ENCODE measurements at regions of chr11 and their contacts with region 1.

Region 1: GRCh38 chr11:110429731-110430266 is at the start of gene FDX1:
- DNase-seq: peak; percentile 74
- ATAC-seq: peak; percentile 86
- H3K4me3 ChIP-seq: peak within 1 kb of the TSS; percentile 86
- H3K27ac ChIP-seq: peak within 1 kb of the TSS; percentile 92
- H3K4me1 ChIP-seq: peaks cover 9% of the 10 kb centered on the region
- H3K27me3 ChIP-seq: no peaks in the 10 kb centered on the region
- CTCF ChIP-seq: peak; percentile 65
- POLR2A ChIP-seq: peak; percentile 82
- RAD21 ChIP-seq: peak; percentile 38
- total RNA-seq, gene FDX1: 4.3 and 10.6 TPM in 2 replicates

Region 2: DNA sequence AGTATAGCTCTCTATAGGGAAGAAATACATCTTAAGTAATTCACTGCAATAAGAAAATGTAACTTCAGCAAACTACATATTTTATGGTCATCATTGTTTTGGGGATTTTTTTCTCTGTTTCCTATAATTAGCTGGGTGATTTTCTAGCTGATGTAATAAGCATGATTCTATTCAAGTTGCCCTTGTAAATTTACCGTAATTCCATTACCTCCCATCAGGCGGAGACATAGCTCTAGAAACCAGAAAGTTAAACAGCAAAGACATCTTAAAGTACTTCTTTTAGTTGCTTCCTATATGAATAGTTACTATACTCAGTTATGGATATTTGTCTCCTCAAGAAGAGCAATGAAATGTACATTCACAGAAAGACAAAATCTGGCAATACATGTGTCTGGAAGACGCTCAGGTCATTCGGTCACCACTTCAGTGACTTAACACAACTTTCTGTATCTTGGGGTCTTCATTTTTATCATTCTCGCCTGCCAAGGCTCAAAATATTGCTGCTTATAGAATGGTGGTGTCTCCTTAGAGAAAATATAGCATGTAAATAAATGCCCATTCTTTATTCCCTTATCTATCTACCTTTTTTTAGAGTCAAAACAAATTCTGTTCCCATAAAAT is 576.5 kb before region 1 on chr11:
- CTCF ChIA-PET with region 1: no interaction called
- POLR2A ChIA-PET with region 1: no interaction called
- dilution Hi-C with region 1: no loop called
- in situ Hi-C with region 1: no loop called
- intact Hi-C with region 1: loop called (anchors 1 kb)
- DNase-seq: peak; percentile 87
- ATAC-seq: peak; percentile 87
- H3K4me3 ChIP-seq: no peak overlapping the region
- H3K27ac ChIP-seq: no peak overlapping the region
- H3K4me1 ChIP-seq: no peaks in the 10 kb centered on the region; the same call in 1 of the 2 replicates
- H3K27me3 ChIP-seq: no peaks in the 10 kb centered on the region
- CTCF ChIP-seq: peak; percentile 91
- POLR2A ChIP-seq: no peak
- RAD21 ChIP-seq: peak; percentile 87

Region 3: DNA sequence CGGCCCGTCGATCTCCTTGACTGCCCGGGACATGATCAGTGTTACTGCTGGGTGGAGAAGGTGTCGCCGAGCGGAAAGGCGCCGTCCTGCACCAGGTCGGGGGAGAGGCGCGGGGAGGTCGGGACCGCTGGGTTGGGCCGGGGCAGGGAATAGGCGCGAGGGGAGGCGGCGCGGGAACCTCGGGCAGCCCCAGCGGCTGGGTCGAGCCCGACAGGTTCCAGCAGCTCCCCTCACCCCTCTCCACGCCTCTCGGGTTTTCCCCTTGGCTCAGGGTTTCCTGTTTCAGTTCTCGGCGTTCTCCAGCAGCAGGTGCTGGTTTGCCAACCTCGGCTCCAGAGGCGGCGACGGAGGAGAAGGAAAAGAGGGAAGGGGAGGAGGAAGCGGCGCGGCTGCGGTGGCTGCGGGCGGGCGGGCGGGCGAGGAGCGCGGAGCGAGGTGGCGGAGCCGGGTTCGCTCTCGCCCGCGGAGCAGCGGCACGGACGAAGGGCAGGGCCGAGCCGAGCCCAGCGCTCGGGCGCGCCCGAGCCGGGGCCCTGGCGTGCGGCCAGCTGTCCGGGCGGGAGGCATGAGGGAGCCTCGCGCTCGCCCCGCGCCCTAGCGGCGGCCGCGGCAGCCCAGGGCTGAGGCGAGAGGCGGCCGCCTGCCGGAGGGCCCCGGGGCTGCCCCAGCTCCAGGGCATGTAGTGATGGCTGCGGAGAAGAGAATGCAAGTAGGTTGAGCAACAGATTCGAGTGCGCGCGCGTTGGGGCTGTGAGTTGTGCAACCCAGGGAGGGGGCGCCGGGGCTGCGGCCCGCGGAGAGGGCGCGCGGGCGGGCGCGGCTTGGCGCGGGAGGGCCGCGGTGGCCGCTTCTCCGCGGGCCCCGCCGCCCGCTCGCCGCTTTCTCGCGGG is 337.0 kb before region 1 on chr11 and contains the start of gene ZC3H12C:
- CTCF ChIA-PET with region 1: no interaction called
- POLR2A ChIA-PET with region 1: no interaction called
- dilution Hi-C with region 1: no loop called
- in situ Hi-C with region 1: no loop called
- intact Hi-C with region 1: loop called (anchors 2 kb)
- DNase-seq: peak; percentile 90
- ATAC-seq: peak; percentile 88
- H3K4me3 ChIP-seq: peak within 1 kb of the TSS; percentile 76
- H3K27ac ChIP-seq: peak within 1 kb of the TSS; percentile 92
- H3K4me1 ChIP-seq: peaks cover 7% of the 10 kb centered on the region
- H3K27me3 ChIP-seq: no peaks in the 10 kb centered on the region
- CTCF ChIP-seq: peak; percentile 81
- POLR2A ChIP-seq: peak; percentile 80
- RAD21 ChIP-seq: peak; percentile 58
- total RNA-seq, gene ZC3H12C: 14.2 and 15.8 TPM in 2 replicates

Region 4: GRCh38 chr11:110296226-110297075 is 133.3 kb before region 1 on chr11 and contains the start of gene RDX:
- CTCF ChIA-PET with region 1: no interaction called
- POLR2A ChIA-PET with region 1: no interaction called
- dilution Hi-C with region 1: no loop called
- in situ Hi-C with region 1: no loop called
- intact Hi-C with region 1: loop called (anchors 1 kb)
- DNase-seq: peak; percentile 63
- ATAC-seq: peak; percentile 92
- H3K4me3 ChIP-seq: peak within 1 kb of the TSS; percentile 99
- H3K27ac ChIP-seq: peak within 1 kb of the TSS; percentile 89
- H3K4me1 ChIP-seq: peaks cover 13% of the 10 kb centered on the region
- H3K27me3 ChIP-seq: no peaks in the 10 kb centered on the region
- CTCF ChIP-seq: peak; percentile 22; the same call in 1 of the 2 replicates
- POLR2A ChIP-seq: peak; percentile 76
- RAD21 ChIP-seq: no peak
- total RNA-seq, gene RDX: 61.1 and 135 TPM in 2 replicates

Region 5: DNA sequence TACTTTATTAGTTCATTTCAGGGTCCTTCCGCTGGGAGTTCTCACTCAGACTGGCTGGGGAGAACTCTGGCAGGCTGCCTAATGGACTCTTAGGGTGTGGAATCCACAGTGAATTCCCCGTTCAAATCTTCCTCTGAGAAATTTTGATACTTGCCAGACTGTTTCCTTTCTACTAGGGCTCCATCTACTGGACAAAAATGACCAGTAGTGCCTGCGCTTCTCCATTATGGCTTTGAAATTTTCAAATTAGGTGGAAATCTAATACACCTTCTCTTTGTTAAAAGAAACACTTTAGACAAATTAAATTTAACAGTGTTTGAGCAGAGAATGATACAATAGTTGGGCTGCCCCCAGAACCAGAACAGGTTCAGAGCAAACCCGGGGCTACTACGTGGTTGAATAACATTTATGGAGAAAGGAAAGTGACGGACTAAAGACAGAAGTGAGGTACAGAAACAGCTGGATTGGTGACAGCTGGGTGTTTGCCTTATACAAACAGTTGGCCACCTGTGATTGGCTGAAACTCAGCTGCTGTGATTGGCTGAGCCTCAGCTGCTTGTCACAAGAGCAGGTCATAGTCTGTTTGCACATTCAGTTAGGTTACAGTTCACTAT is 53.0 kb before region 1 on chr11:
- CTCF ChIA-PET with region 1: interaction called, 4 read pairs
- POLR2A ChIA-PET with region 1: no interaction called
- dilution Hi-C with region 1: no loop called
- in situ Hi-C with region 1: no loop called
- intact Hi-C with region 1: loop called (anchors 5 kb)
- DNase-seq: peak; percentile 79
- ATAC-seq: peak; percentile 84
- H3K4me3 ChIP-seq: no peak overlapping the region
- H3K27ac ChIP-seq: no peak overlapping the region
- H3K4me1 ChIP-seq: peaks cover 6% of the 10 kb centered on the region
- H3K27me3 ChIP-seq: no peaks in the 10 kb centered on the region
- CTCF ChIP-seq: peak; percentile 83
- POLR2A ChIP-seq: no peak
- RAD21 ChIP-seq: peak; percentile 79

Region 6: DNA sequence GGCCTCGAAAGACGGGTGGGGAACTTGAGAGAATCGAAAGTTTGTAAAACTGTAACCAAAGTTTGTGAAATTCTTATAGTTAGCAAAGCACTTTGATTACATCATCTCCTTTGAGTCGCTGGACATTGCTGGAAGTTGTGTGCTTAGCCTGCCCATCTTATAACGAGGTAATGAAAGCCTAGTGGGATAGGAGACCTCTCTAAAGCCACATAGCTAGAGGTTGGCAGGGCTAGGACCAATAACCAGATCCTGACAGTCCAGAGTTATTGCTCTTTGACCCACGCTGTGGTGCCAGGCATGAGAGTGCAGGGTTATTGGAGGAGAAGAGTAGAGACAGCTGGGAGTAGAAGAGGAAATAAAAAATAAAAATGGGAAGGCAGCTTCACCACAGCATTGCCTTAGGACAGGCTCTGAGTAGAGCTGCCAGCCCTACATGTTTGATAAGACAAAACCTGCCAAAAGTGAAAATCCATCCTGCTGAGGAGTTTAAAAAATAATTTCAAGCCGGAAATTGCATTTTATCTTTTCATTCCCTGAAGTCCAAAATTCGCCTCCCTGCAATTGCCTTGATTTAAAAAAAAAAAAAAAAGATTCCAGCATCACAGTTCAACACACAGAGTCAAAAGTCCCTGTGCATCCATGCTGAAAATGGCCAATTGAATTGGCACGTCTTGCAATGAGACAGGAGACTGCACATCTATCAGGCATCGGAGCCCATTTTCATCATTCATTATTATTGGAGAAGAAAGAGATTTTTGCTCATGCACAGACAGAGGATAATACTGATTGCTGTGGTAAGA is 590.3 kb after region 1 on chr11:
- CTCF ChIA-PET with region 1: no interaction called
- POLR2A ChIA-PET with region 1: no interaction called
- dilution Hi-C with region 1: no loop called
- in situ Hi-C with region 1: no loop called
- intact Hi-C with region 1: no loop called
- DNase-seq: peak; percentile 46
- ATAC-seq: peak; percentile 42; the same call in 1 of the 2 replicates
- H3K4me3 ChIP-seq: no peak overlapping the region
- H3K27ac ChIP-seq: no peak overlapping the region
- H3K4me1 ChIP-seq: no peaks in the 10 kb centered on the region
- H3K27me3 ChIP-seq: peaks cover 3% of the 10 kb centered on the region; the same call in 1 of the 2 replicates
- CTCF ChIP-seq: no peak
- POLR2A ChIP-seq: no peak
- RAD21 ChIP-seq: no peak

Region 7: GRCh38 chr11:111446404-111447111 is 1016.8 kb after region 1 on chr11:
- CTCF ChIA-PET with region 1: no interaction called
- POLR2A ChIA-PET with region 1: no interaction called
- dilution Hi-C with region 1: no loop called
- in situ Hi-C with region 1: no loop called
- intact Hi-C with region 1: loop called (anchors 10 kb)
- DNase-seq: peak; percentile 94
- ATAC-seq: peak; percentile 98
- H3K4me3 ChIP-seq: no peak overlapping the region
- H3K27ac ChIP-seq: no peak overlapping the region
- H3K4me1 ChIP-seq: no peaks in the 10 kb centered on the region; the same call in 1 of the 2 replicates
- H3K27me3 ChIP-seq: no peaks in the 10 kb centered on the region; the same call in 1 of the 2 replicates
- CTCF ChIP-seq: peak; percentile 95
- POLR2A ChIP-seq: 0 out of 2 replicates have a peak, but pooled peaks have one; percentile 48
- RAD21 ChIP-seq: peak; percentile 99

Measured in IMR-90 (cell line).